Endothelial cell of umbilical vein (primary cell): ENCODE measurements at regions of chr5 and their contacts with region 1.

Region 1: GRCh38 chr5:139765409-139766217 is 30.0 kb upstream of the PSD2 start:
- DNase-seq: peak; percentile 76
- H3K4me3 ChIP-seq: peak overlapping the region; percentile 37 to 49 (median 40)
- H3K27ac ChIP-seq: no peak overlapping the region
- H3K4me1 ChIP-seq: peaks cover 21% of the 10 kb centered on the region
- H3K27me3 ChIP-seq: peaks cover 12 to 14% of the 10 kb centered on the region in 2 experiments
- CTCF ChIP-seq: peak in 1 of 2 donors; percentile 83
- POLR2A ChIP-seq: no peak

Region 2: DNA sequence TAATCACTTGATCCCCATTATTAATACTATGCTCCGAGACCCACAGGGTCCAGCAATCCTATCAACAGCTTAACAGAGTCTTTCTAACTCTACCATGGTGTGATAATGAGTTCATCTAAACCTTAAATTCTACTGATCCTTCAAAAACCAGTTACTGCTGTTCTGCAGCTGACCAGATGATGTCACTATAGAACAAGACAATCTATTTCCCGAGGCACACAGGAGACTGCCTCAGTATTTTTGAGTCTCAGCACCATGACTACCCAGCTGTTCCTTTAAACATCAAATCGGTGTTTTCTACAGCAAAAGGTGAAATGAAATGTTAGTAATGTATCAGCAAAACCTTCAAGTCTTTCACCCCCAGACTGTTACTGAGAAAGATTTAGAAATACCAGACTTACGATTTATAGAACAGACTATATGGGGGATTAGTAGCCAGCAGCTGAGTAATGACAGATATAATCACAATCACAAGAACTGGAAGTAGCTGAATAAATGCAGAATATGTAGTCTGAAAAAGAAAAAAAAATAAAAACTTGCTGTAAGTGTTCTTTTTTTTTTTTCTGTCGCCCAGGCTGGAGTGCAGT is 343.2 kb before region 1 on chr5:
- CTCF ChIA-PET with region 1: interaction called, 3 read pairs
- POLR2A ChIA-PET with region 1: no interaction called
- dilution Hi-C with region 1: no loop called
- intact Hi-C with region 1: loop called (anchors 5 kb)
- DNase-seq: peak; percentile 79
- H3K4me3 ChIP-seq: no peak overlapping the region
- H3K27ac ChIP-seq: no peak overlapping the region
- H3K4me1 ChIP-seq: peaks cover 25% of the 10 kb centered on the region
- H3K27me3 ChIP-seq: no peaks in the 10 kb centered on the region
- CTCF ChIP-seq: peak; percentile 63 to 81
- POLR2A ChIP-seq: no peak

Region 3: DNA sequence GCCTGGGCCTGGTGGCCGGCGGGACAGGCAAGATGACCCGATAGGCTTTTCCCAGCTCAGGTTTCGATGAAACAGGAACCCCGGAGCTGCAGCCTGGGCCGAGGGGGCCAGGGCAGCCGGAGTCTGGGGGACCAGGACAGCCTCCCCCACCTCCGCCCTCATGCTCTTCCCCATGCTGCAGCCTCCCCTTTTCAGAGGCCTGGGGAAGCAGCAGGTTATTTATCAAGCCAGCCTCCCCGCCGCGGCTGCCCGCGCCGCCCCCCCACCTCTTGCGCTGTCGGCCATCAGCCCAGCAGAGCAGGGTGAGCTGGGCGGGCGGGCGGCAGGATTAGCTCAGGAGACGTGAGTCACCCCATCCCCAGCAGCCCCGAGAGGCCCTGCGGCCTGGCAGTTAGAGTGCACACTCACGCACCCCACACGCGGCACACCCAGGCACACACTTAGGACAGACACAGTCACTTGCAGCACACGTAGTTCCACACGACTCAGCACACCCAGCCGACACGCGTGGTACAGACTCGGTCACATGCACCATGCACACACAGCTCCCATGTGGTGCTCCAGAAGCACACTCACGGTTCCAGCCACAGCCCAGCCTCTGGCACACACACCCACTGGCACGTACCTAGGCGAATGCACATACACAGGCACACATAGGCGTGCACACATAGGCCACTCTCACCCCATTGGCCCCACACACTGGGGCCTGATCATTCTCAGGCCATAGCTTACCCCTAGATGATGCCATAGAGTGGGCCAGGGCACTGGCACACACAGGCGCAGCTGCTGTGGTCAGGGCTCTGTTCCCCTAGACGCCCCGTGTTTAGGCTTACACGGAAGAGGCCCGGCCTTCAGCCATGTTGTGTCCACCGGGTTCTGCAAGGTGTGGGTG is 104.4 kb before region 1 on chr5:
- CTCF ChIA-PET with region 1: interaction called, 14 read pairs
- POLR2A ChIA-PET with region 1: interaction called, 6 read pairs
- dilution Hi-C with region 1: no loop called
- intact Hi-C with region 1: no loop called
- DNase-seq: peak; percentile 83
- H3K4me3 ChIP-seq: no peak overlapping the region
- H3K27ac ChIP-seq: no peak overlapping the region
- H3K4me1 ChIP-seq: peaks cover 33% of the 10 kb centered on the region
- H3K27me3 ChIP-seq: no peaks in the 10 kb centered on the region
- CTCF ChIP-seq: no peak
- POLR2A ChIP-seq: no peak

Region 4: DNA sequence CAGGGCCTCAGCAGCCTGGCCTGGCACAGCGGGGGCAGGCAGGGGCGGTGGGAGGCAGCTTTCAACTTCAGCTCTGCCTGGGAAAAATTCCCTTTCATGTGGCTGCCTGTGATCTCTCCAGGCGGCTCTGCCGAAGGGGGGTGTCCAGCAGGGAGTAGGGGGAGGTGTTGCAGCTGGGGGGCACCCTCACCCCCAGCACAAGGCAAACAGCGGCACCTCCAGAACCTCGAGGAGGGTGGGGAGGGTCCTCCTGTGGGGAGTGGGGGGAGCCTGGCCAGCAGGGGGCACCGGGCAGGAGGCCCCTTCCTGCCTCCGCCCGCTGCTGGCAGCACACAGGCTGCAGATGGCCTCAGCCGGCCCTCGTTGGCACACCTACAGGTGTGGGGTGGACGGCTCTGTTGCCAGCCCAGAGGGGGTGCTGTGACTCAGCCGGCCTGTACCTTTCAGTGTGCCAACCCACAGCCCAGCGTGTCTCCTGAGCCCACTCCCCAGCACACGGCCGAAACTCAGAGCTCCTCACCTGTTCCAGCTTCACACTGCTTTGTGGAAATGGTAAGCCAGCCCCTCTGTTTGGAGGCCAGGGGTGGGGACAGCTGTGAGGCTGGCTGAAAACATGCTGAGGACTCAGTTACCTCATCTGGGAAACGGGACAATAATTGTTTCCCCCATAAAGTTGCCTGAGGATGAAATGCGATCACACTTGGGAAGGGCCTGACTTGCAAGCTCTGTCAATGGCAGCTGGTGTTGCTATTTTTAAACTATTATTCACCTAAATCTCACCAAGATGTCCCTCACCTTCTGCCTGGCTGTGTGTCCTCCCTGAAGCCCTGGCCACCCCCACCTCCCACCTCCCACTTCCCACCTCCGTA is 80.5 kb before region 1 on chr5:
- CTCF ChIA-PET with region 1: interaction called, 24 read pairs
- POLR2A ChIA-PET with region 1: no interaction called
- dilution Hi-C with region 1: no loop called
- intact Hi-C with region 1: no loop called
- DNase-seq: no peak
- H3K4me3 ChIP-seq: no peak overlapping the region
- H3K27ac ChIP-seq: no peak overlapping the region
- H3K4me1 ChIP-seq: no peaks in the 10 kb centered on the region
- H3K27me3 ChIP-seq: no peaks in the 10 kb centered on the region
- CTCF ChIP-seq: no peak
- POLR2A ChIP-seq: no peak

Region 5: DNA sequence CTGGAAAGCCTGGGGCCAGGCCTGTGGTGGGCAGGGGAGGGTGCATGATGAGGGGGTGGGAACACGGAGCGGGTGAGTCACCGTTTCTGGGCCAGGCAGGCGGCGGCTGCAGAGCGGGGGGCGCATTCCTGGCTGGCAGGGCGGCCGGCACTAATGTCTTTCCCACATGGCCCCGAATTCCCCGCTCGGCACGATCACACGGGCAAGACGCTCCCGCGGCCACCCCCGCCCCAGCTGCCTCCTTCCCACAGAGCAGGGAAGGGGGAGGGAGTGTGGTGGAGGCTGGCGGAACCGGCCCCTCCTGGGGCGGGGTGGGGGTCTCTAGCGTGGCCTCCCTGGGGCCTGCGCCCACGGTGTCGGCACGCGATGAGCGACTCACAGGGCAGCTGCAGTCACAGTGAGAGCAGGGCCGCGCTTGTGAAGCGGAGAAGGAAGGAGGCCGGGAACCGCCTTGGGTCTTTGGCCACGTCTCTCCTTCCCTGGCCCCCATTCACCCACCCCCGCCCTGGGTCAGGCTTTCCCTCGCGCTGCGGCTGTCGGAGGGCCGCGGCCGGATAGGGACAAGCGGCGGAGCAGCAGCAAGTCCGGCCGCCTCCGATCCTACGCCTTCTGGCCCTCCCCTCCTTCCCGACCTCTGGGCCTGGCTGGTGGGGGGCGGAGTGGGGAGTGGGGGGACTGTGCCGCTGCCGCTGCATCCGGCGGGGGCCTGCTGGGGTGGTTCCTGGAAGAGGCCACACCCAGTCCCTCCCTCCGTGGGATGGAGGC is 68.5 kb before region 1 on chr5:
- CTCF ChIA-PET with region 1: interaction called, 9 read pairs
- POLR2A ChIA-PET with region 1: no interaction called
- dilution Hi-C with region 1: no loop called
- intact Hi-C with region 1: loop called (anchors 5 kb)
- DNase-seq: peak; percentile 55
- H3K4me3 ChIP-seq: peak overlapping the region in 2 of 3 experiments; percentile 6 to 24
- H3K27ac ChIP-seq: peak overlapping the region; percentile 4
- H3K4me1 ChIP-seq: peaks cover 6% of the 10 kb centered on the region
- H3K27me3 ChIP-seq: peaks cover 2 to 6% of the 10 kb centered on the region in 2 experiments
- CTCF ChIP-seq: no peak
- POLR2A ChIP-seq: no peak

Region 6: DNA sequence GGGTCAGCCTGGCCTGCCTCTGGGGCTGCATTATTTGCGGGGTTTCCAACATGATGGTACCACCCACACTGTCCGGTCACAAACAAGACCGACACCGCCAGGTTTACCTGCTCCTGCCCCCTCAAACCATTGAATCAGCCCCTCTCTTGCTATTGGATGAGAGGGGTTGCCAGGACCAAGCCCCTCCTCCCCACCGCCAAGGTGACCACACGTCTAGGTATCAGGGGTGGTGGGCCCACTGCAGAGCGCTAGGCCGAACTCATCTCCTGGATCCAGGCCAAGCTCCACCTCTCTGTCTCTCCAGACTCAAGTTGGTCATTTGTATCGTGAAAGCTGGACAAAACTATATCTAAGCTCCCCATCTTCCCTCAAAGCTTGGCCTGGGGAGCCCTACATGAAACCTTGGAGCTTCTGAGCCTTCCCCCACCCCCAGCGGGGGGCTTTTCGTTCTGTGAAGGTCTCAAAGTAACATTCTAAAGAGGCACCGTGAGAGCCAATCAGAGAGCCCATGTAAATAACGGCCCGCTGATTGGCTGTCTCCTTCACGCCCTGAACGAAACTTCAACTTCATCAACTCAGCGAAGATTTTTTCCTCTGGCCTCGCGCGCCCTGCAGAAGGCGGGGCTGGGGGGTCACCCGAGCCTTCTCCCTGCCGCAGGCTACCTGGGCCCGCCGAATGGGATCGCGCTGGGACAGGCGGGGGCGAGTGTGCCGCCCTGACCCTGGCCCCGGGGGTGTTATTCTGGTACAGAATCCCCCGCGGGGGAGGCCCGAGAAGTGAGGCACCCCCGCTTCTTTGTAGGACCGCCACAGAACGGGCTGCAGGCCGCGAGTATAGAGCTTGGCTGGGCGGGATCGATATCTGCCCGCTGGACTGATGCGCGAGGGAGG is 19.6 kb before region 1 on chr5:
- CTCF ChIA-PET with region 1: interaction called, 14 read pairs
- POLR2A ChIA-PET with region 1: no interaction called
- dilution Hi-C with region 1: no loop called
- intact Hi-C with region 1: loop called (anchors 2 kb)
- DNase-seq: peak; percentile 67
- H3K4me3 ChIP-seq: peak overlapping the region in 1 of 3 experiments; percentile 4
- H3K27ac ChIP-seq: no peak overlapping the region
- H3K4me1 ChIP-seq: peaks cover 18% of the 10 kb centered on the region
- H3K27me3 ChIP-seq: peaks cover 25 to 28% of the 10 kb centered on the region in 2 experiments
- CTCF ChIP-seq: no peak
- POLR2A ChIP-seq: no peak